ENCODE measurements at regions of chr1 and their contacts with region 1.

Region 1: DNA sequence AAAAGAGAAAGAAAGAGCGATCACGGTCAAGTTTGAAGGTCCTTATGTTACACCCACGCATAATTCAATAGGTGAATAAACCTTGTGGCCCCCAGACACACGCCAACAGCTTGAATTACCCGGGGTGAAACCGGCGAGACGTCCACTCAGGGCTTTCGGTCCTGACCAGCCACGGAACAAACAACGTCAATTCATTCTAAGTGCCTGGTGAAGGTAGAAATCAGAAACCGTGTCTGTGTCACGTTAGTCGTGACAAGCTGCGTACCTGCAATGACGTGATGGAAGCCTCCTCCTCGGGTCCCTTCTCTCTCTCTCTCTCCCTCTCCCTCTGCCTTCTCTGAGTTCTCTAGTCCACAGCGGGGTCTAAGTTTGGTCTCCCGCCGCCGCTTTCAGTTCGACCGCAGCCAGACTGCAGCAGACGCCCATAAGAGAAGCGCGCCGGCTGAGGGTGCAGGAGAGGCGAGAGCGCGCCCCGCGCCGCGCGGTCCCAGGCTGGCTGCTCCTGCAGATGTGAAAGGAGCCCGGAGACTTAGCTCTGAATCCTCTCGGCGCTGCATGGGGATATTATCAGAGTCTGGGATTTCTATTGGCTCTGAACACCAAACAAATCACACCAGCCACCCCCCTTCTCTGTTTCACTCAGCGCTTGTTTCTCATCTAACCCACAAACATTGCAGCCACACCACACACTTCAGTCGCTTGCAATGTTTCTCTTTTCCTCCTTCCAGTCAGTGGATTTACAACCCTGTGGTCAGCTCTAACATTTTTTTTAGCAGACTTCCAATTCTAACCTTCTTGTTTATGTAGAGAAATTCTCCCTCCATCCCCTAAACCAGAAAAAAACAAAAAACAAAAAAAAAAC is at the start of gene GREM2:
- DNase-seq: peak; percentile 85
- total RNA-seq, gene GREM2: 4.9 to 21.1 TPM

Region 2: GRCh38 chr1:240190881-240191401 is 420.9 kb before region 1 on chr1:
- intact Hi-C with region 1: loop called in 1 of 2 experiments (anchors 10 kb)
- DNase-seq: no peak

Region 3: GRCh38 chr1:240555524-240555923 is 56.3 kb before region 1 on chr1:
- intact Hi-C with region 1: loop called in 1 of 2 experiments (anchors 2 kb)
- DNase-seq: no peak